ENCODE measurements at regions of chr11 and their contacts with region 1.

Region 1: DNA sequence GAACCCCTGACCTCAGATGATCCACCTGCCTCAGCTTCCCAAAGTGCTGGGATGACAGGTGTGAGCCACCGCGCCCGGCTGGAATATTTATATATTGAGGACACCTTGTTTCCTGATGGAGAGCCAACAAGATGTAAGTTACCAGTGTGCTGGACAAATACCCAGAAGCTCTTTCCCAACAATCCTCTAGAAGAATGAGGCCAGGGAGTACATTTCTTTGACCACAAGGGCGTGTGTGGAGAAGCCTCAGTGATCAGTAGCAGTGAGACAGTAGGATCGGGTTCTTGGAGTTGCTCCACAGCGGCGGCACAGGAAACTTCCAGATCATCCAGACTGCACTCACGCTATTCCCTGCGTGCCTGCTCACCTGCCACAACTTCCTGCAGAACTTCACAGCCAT is 10.3 kb upstream of the POLA2 start:
- DNase-seq: no peak
- H3K4me3 Mint-ChIP-seq: no peak overlapping the region
- H3K27ac Mint-ChIP-seq: no peak overlapping the region
- H3K4me1 Mint-ChIP-seq: peaks cover 14% of the 10 kb centered on the region
- H3K27me3 Mint-ChIP-seq: no peaks in the 10 kb centered on the region
- CTCF ChIP-seq: no peak

Region 2: GRCh38 chr11:65111744-65112414 is 139.6 kb before region 1 on chr11 and contains the start of gene TM7SF2:
- CTCF ChIA-PET with region 1: interaction called, 5 read pairs
- POLR2A ChIA-PET with region 1: interaction called, 4 read pairs
- intact Hi-C with region 1: loop called (anchors 2 kb)
- DNase-seq: peak; percentile 96
- H3K4me3 Mint-ChIP-seq: peak within 1 kb of the TSS; percentile 93
- H3K27ac Mint-ChIP-seq: peak within 1 kb of the TSS; percentile 94
- H3K4me1 Mint-ChIP-seq: peaks cover 11% of the 10 kb centered on the region
- H3K27me3 Mint-ChIP-seq: no peaks in the 10 kb centered on the region
- CTCF ChIP-seq: no peak
- total RNA-seq, gene TM7SF2: 8.5 and 14.0 TPM in 2 replicates

Region 3: DNA sequence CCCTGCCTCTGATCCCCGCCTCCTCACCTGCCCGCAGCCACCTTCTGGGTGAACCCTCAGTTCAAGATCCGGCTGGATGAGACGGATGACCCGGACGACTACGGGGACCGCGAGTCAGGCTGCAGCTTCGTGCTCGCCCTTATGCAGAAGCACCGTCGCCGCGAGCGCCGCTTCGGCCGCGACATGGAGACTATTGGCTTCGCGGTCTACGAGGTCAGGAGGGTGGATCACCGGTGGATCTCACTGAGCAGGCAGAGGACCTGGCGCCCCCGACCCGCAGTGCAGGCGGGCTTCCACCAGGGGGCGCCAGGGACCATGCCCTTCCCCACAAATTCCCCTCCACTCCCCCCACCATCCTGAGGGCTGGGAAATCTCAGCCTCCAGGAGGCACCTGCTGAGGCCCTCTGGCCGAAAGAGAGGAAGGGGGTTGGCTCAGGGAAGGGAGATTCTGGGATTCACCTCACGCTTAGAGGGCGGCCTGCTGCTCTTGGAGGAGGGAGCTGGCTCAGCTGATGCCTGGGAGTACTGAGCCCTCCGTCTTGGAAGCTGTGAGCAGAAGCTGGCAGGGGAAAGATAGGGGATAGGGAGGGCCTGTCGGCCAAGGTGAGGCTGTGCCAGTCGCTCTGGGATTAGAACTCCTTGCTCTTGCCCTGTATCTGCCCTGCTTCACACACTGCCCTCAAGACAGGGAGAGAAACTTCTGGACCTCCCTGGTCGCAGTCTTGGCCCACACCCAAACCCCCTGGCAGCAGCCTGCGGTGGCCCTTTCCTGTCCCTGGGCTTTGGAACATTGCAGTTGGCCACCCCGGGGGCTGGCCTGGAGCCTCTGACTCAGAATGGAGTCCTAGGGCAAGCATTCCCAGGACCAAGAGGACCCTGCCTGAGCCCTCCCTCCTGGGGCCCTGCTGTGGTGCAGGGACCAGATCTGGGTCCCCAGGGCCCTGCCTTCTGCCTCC is 46.6 kb before region 1 on chr11:
- CTCF ChIA-PET with region 1: interaction called, 4 read pairs
- POLR2A ChIA-PET with region 1: interaction called, 3 read pairs
- intact Hi-C with region 1: loop called (anchors 5 kb)
- DNase-seq: peak; percentile 43
- H3K4me3 Mint-ChIP-seq: no peak overlapping the region
- H3K27ac Mint-ChIP-seq: no peak overlapping the region
- H3K4me1 Mint-ChIP-seq: no peaks in the 10 kb centered on the region
- H3K27me3 Mint-ChIP-seq: no peaks in the 10 kb centered on the region
- CTCF ChIP-seq: peak; percentile 97

Region 4: DNA sequence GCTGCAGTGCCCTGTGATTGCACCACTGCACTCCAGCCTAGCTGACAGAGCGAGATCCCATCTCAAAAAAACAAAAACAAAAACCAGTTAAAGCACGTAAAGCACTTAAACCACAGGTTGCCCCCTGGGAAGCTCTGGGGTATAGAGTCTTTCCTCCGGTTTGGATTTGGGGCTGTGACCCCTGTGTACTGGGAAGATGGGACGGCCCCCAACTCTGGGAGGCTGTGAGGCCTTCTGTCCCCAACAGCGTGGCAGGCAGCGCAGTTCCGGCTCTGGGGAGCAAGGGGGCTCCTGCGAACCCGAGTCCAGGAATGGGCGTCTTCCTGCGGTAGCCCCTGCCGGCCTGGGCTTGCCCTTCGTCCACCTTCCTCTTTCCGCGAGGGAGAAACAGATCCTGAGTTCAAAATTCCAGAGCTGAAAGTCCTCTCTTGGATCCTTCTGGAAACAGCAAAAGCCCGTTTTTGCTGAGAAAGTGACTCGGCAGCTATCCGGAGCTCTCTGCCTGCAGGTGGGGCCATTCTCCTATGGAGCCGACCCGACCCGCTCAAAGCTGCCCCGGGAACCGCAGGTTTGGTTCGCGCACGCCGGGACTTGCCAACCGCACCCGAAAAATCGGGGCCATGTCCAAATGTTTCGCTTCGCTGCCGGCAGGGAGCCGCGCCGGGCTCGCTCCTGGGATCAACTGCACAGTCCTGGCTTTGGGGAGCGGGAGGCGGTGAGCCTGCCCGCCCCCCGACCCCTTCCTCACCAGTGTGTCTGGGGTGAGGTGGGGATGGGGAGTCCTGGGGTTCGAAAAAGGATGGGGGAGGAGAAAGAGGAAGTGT is 26.0 kb before region 1 on chr11:
- CTCF ChIA-PET with region 1: interaction called, 9 read pairs
- POLR2A ChIA-PET with region 1: interaction called, 8 read pairs
- intact Hi-C with region 1: loop called (anchors 1 kb)
- DNase-seq: peak; percentile 72
- H3K4me3 Mint-ChIP-seq: peak overlapping the region; percentile 71
- H3K27ac Mint-ChIP-seq: peak overlapping the region; percentile 35
- H3K4me1 Mint-ChIP-seq: peaks cover 5% of the 10 kb centered on the region
- H3K27me3 Mint-ChIP-seq: no peaks in the 10 kb centered on the region
- CTCF ChIP-seq: peak; percentile 36

Region 5: DNA sequence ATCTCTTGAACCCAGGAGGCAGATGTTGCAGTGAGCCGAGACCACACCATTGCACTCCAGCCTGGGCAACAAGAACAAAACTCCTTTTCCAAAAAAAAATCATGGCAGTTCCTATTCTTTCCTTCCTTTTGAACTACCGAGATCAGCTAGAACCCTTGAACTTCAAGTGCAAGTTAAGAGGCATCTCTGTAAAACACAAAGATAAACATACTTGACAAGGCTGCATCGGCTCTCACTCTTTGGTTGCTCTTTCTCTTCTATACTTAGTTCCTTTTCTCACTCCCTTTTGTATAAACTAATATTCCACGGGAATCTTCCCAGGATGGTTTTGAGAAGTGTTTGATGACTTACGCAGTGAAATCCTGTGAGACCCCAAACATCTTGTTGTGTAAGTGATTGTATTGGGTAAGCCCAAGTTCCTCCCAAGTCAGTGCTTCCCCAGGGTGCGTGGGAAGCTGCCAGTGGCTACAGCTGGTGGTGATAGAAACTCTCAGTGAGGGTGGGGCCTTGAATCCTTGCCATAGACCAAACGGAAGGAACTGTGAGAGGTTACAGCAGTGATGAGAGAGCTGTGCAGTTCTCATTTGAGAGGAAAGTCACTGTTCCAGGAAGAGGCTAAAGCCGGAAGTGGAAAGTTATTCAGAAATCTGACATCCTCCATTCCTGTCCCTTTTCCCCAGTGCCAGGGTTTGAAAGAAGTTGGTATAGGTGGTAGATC is 39.1 kb after region 1 on chr11:
- CTCF ChIA-PET with region 1: no interaction called
- POLR2A ChIA-PET with region 1: no interaction called
- intact Hi-C with region 1: no loop called
- DNase-seq: peak; percentile 95
- H3K4me3 Mint-ChIP-seq: no peak overlapping the region
- H3K27ac Mint-ChIP-seq: peak overlapping the region; percentile 72
- H3K4me1 Mint-ChIP-seq: peaks cover 20% of the 10 kb centered on the region
- H3K27me3 Mint-ChIP-seq: no peaks in the 10 kb centered on the region
- CTCF ChIP-seq: no peak

Measured in MCF 10A (cell line).